Activated CD4-positive, alpha-beta memory T cell treated with anti-CD3 and anti-CD28 coated beads for 36 hours (primary cell): ENCODE measurements at regions of chr1 and their contacts with region 1.

Region 1: DNA sequence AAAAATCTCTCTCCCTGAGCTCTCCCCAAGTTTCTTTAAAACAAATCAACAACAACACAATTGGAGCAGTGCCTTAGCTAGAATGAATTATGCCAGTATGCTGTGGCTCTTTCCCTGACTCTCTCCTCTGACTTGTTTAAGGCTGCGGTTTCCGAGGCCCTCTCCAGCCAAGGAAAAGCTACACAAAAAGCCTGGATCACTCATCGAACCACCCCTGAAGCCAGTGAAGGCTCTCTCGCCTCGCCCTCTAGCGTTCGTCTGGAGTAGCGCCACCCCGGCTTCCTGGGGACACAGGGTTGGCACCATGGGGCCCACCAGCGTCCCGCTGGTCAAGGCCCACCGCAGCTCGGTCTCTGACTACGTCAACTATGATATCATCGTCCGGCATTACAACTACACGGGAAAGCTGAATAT is 1.9 kb downstream of the S1PR1 start:
- DNase-seq: peak; percentile 95
- H3K4me3 Mint-ChIP-seq: peak overlapping the region; percentile 94
- H3K27ac Mint-ChIP-seq: peak overlapping the region; percentile 100
- H3K4me1 Mint-ChIP-seq: peaks cover 47% of the 10 kb centered on the region
- H3K27me3 Mint-ChIP-seq: peaks cover 2% of the 10 kb centered on the region

Region 2: GRCh38 chr1:100921109-100921706 is 317.5 kb before region 1 on chr1:
- CTCF ChIA-PET with region 1: interaction called, 34 read pairs
- POLR2A ChIA-PET with region 1: interaction called, 4 read pairs
- intact Hi-C with region 1: loop called (anchors 1 kb)
- DNase-seq: no peak
- H3K4me3 Mint-ChIP-seq: no peak overlapping the region
- H3K27ac Mint-ChIP-seq: peak overlapping the region; percentile 52
- H3K4me1 Mint-ChIP-seq: peaks cover 56% of the 10 kb centered on the region
- H3K27me3 Mint-ChIP-seq: no peaks in the 10 kb centered on the region

Region 3: DNA sequence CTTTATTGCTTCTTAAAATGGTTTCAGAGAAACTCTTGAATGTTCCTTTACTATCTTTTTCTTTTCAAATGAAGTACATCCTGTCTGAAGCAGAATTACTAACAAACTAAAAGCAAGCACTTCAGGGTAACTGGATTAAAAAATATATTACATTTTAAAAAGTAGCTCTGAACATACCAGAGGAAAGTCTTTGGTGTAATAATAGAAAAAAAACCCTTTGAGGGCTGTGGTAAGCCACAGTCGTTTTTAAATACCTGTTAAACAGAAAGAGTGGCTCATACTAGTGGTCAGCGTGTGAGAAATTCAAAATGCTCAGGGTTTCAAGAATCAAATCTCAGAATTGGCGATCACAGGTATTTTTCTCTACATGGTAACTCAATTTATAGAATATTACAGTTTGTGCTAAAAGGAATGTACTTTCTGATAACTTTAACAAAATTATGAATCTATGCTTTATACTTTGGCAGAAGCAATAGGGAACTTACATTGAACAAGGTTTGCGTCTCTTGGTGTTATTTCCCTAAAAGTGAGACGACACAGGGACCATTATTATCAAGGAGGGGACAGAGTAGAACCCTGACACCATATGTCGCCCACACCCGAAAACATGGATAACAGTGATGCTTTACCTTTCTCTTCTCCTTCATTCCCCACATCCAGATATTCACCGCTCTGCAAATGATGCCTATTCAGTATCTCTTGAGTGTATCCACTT is 116.1 kb before region 1 on chr1:
- CTCF ChIA-PET with region 1: interaction called, 5 read pairs
- POLR2A ChIA-PET with region 1: interaction called, 3 read pairs
- intact Hi-C with region 1: loop called (anchors 1 kb)
- DNase-seq: no peak
- H3K4me3 Mint-ChIP-seq: no peak overlapping the region
- H3K27ac Mint-ChIP-seq: peak overlapping the region; percentile 1
- H3K4me1 Mint-ChIP-seq: peaks cover 43% of the 10 kb centered on the region
- H3K27me3 Mint-ChIP-seq: no peaks in the 10 kb centered on the region

Region 4: GRCh38 chr1:101178688-101179491 is 59.8 kb before region 1 on chr1:
- CTCF ChIA-PET with region 1: interaction called, 44 read pairs
- POLR2A ChIA-PET with region 1: interaction called, 129 read pairs
- intact Hi-C with region 1: loop called (anchors 1 kb)
- DNase-seq: peak; percentile 58
- H3K4me3 Mint-ChIP-seq: peak overlapping the region; percentile 71
- H3K27ac Mint-ChIP-seq: peak overlapping the region; percentile 100
- H3K4me1 Mint-ChIP-seq: peaks cover 79% of the 10 kb centered on the region
- H3K27me3 Mint-ChIP-seq: no peaks in the 10 kb centered on the region

Region 5: GRCh38 chr1:101257500-101258325 is 19.0 kb after region 1 on chr1:
- CTCF ChIA-PET with region 1: interaction called, 42 read pairs
- POLR2A ChIA-PET with region 1: interaction called, 4 read pairs
- intact Hi-C with region 1: loop called (anchors 2 kb)
- DNase-seq: peak; percentile 49
- H3K4me3 Mint-ChIP-seq: no peak overlapping the region
- H3K27ac Mint-ChIP-seq: peak overlapping the region; percentile 67
- H3K4me1 Mint-ChIP-seq: peaks cover 66% of the 10 kb centered on the region
- H3K27me3 Mint-ChIP-seq: no peaks in the 10 kb centered on the region

Region 6: GRCh38 chr1:101567582-101568189 is 329.0 kb after region 1 on chr1:
- CTCF ChIA-PET with region 1: no interaction called
- POLR2A ChIA-PET with region 1: no interaction called
- intact Hi-C with region 1: no loop called
- DNase-seq: peak; percentile 50
- H3K4me3 Mint-ChIP-seq: no peak overlapping the region
- H3K27ac Mint-ChIP-seq: no peak overlapping the region
- H3K4me1 Mint-ChIP-seq: no peaks in the 10 kb centered on the region
- H3K27me3 Mint-ChIP-seq: peaks cover 2% of the 10 kb centered on the region